ENCODE measurements at regions of chr9 and their contacts with region 1.

Region 1: GRCh38 chr9:88303721-88304451 is 84.4 kb upstream of the SPIN1 start:
- DNase-seq: peak; percentile 65
- H3K4me3 Mint-ChIP-seq: peak overlapping the region; percentile 58
- H3K27ac Mint-ChIP-seq: peak overlapping the region; percentile 83
- H3K4me1 Mint-ChIP-seq: peaks cover 46% of the 10 kb centered on the region
- H3K27me3 Mint-ChIP-seq: peaks cover 7% of the 10 kb centered on the region

Region 2: GRCh38 chr9:87375397-87376073 is 928.4 kb before region 1 on chr9:
- intact Hi-C with region 1: loop called (anchors 10 kb)
- DNase-seq: no peak
- H3K4me3 Mint-ChIP-seq: no peak overlapping the region
- H3K27ac Mint-ChIP-seq: no peak overlapping the region
- H3K4me1 Mint-ChIP-seq: peaks cover 11% of the 10 kb centered on the region
- H3K27me3 Mint-ChIP-seq: peaks cover 10% of the 10 kb centered on the region

Region 3: DNA sequence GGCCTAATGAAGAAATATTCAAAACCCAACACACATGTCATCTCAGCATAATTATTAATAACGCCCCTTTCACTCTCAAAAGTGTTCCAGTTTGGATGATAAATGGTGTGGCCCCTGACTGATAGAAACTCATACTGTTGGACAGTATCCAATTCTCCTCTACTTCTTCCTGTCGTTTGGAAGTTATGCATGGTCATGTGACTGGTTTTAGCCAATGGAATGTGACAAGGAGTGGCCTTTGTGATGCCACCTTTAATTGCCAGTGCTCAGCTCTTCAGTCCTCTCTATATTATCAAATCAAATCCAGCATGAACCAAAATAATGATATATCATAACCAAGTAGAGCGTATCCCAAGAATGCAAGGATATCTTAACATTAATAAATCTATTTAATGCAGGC is 33.5 kb before region 1 on chr9:
- intact Hi-C with region 1: no loop called
- DNase-seq: no peak
- H3K4me3 Mint-ChIP-seq: no peak overlapping the region
- H3K27ac Mint-ChIP-seq: no peak overlapping the region
- H3K4me1 Mint-ChIP-seq: peaks cover 6% of the 10 kb centered on the region
- H3K27me3 Mint-ChIP-seq: no peaks in the 10 kb centered on the region

Region 4: DNA sequence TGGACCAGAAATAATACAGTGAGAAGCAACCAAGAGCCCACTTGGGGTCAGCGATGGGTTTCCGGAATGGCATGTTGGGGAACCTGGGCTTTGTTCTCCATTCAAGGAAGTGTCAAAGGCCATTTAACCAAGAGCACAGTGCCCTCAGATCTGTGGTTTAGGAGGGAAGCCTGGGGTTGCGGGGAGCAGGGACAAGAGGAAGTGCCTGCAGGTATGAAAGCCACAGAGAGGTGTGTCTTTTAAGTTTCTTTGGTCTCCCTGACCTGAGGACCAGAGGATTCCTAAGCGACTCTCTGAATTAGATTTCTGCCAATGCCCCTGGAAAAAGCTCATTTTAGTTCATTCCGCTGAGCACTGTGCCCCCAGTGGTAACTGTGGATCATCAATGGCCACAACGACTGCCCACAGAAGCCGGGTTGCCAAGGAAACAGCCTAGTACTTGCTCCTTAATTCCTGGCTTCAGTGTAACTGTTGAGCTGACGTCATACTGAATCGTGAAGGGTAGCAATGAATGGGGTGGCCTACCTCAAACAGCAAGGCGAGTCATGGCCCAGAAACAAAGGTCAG is 23.0 kb before region 1 on chr9:
- intact Hi-C with region 1: loop called (anchors 2 kb)
- DNase-seq: no peak
- H3K4me3 Mint-ChIP-seq: peak overlapping the region; percentile 45
- H3K27ac Mint-ChIP-seq: no peak overlapping the region
- H3K4me1 Mint-ChIP-seq: peaks cover 30% of the 10 kb centered on the region
- H3K27me3 Mint-ChIP-seq: peaks cover 16% of the 10 kb centered on the region

Region 5: DNA sequence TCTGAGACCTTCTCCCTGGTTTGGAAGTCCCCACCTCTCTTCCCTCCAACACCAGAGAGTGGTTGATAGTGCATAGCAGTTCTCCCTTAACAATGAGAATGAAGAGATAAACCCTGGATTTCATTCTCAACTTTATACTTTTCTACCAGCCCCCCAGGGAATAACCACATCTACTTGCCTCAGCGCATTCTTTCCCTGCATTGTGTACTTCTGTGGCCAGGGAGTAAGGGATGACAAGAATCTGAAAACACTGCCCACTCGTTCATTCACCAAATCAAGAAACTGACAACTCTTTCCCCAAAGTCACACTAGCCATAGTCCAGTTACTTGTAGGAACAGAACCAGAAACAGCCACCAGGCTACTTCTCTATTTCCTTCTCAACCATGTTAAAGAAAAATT is 38.4 kb after region 1 on chr9:
- intact Hi-C with region 1: no loop called
- DNase-seq: no peak
- H3K4me3 Mint-ChIP-seq: no peak overlapping the region
- H3K27ac Mint-ChIP-seq: no peak overlapping the region
- H3K4me1 Mint-ChIP-seq: peaks cover 5% of the 10 kb centered on the region
- H3K27me3 Mint-ChIP-seq: peaks cover 2% of the 10 kb centered on the region

Region 6: DNA sequence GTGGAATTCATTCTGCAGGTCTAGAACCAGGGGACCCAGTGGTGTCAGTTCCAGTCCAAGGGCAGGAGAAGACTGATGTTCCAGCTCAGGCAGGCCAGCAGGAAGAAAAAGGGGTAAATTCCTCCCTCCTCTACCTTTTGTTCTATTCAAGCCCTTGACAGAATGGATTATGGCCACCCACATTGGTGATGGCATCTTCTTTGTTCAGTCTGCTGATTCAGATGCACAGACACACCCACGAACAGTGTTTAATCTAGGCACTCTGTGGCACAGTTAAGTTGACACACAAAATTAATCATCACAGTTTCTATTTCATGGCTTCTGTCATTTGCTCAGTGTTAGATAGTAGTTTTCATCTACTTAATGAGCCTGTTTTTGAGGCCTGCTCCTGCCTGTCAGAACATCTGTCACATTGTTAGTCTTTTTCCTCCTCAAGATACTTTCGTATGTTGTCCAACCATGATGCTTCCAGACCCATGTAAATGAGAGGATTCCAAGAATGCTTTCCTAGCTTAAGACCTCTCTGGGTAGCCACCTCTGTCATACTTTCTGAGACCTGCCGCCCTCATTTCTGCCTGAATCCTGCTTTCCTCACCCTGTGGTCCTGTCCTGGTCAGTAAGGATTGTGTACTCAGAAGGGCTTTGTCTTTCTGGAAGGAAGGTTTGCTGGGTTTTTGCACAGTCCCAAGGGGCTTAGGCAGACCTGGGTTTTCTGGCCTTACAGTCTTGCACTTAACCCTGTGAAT is 156.9 kb after region 1 on chr9:
- intact Hi-C with region 1: loop called (anchors 5 kb)
- DNase-seq: no peak
- H3K4me3 Mint-ChIP-seq: no peak overlapping the region
- H3K27ac Mint-ChIP-seq: no peak overlapping the region
- H3K4me1 Mint-ChIP-seq: peaks cover 14% of the 10 kb centered on the region
- H3K27me3 Mint-ChIP-seq: no peaks in the 10 kb centered on the region

Region 7: GRCh38 chr9:88988796-88989560 is 685.1 kb after region 1 on chr9:
- intact Hi-C with region 1: loop called (anchors 10 kb)
- DNase-seq: no peak
- H3K4me3 Mint-ChIP-seq: peak overlapping the region; percentile 64
- H3K27ac Mint-ChIP-seq: peak overlapping the region; percentile 90
- H3K4me1 Mint-ChIP-seq: peaks cover 51% of the 10 kb centered on the region
- H3K27me3 Mint-ChIP-seq: peaks cover 13% of the 10 kb centered on the region